Naive thymus-derived CD4-positive, alpha-beta T cell (primary cell): ENCODE measurements at regions of chr19 and their contacts with region 1.

Region 1: GRCh38 chr19:32674959-32675719 is at the start of gene ANKRD27:
- DNase-seq: peak; percentile 96 to 100 (median 98)
- ATAC-seq: peak; percentile 96
- H3K4me3 ChIP-seq: peak within 1 kb of the TSS; percentile 97
- H3K4me3 Mint-ChIP-seq: peak within 1 kb of the TSS; percentile 90 to 98 (median 96)
- H3K27ac ChIP-seq: peak within 1 kb of the TSS; percentile 67
- H3K27ac Mint-ChIP-seq: peak within 1 kb of the TSS; percentile 70 to 90 (median 83)
- H3K4me1 ChIP-seq: peaks cover 10 to 14% of the 10 kb centered on the region in 2 donors
- H3K4me1 Mint-ChIP-seq: peaks cover 25 to 44% (median 36%) of the 10 kb centered on the region in 7 donors
- H3K27me3 ChIP-seq: no peaks in the 10 kb centered on the region
- H3K27me3 Mint-ChIP-seq: peaks cover 6 to 35% (median 8%) of the 10 kb centered on the region in 5 donors
- total RNA-seq, gene ANKRD27: 23.6 to 44.9 (median 41.2) TPM

Region 2: DNA sequence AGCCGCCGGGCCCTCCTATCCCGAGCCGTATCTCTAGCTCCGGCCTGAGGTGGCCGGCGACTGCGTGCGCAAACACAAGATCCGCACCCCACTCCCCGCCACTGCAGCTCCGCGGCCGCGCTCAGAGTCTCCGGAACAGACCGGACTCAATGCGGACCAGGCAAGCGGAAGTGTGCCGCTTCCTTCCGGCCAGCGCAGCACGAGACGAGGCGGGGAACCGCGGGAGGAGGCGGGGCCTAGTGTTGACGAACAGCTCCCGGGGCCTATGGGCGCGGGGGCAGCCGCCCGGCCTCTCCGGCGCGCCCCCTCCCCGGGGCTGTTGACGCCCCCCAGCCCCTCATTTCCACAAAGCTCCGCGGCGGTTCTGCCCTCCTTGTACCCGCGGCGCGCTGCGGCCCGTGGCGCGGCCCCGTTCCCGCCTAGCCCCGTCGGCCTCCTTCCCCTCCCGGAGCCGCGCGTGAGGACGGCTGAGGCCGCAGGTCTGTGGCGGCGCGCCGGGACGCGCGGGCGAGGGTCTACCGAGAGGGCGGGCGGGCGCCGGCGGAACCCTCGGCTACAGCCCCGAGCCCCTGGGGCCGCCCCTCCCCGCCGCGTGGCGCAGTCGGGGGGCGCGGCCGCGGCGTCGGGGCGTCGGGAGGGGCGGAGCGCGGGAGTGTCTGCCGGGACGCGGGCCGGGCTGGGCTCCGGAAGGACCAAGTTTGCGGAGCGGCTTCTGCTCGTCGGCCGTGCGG is 269.5 kb before region 1 on chr19 and contains the start of gene DPY19L3:
- CTCF ChIA-PET with region 1: no interaction called
- POLR2A ChIA-PET with region 1: interaction called, 5 read pairs
- intact Hi-C with region 1: loop called (anchors 1 kb)
- DNase-seq: peak; percentile 74 to 96 (median 82)
- ATAC-seq: peak; percentile 95
- H3K4me3 ChIP-seq: peak within 1 kb of the TSS; percentile 85
- H3K4me3 Mint-ChIP-seq: peak within 1 kb of the TSS; percentile 83 to 93 (median 88)
- H3K27ac ChIP-seq: peak within 1 kb of the TSS; percentile 90
- H3K27ac Mint-ChIP-seq: peak within 1 kb of the TSS; percentile 86 to 91 (median 89)
- H3K4me1 ChIP-seq: peaks cover 4 to 12% of the 10 kb centered on the region in 2 donors
- H3K4me1 Mint-ChIP-seq: peaks cover 8 to 34% (median 17%) of the 10 kb centered on the region in 7 donors
- H3K27me3 ChIP-seq: no peaks in the 10 kb centered on the region
- H3K27me3 Mint-ChIP-seq: no peaks in the 10 kb centered on the region
- total RNA-seq, gene DPY19L3: 8.4 to 19.3 (median 15.8) TPM

Region 3: GRCh38 chr19:32642771-32643170 is 32.4 kb before region 1 on chr19:
- CTCF ChIA-PET with region 1: no interaction called
- POLR2A ChIA-PET with region 1: no interaction called
- intact Hi-C with region 1: loop called (anchors 1 to 2 kb)
- DNase-seq: peak in 8 of 9 donors; percentile 46 to 76 (median 62)
- ATAC-seq: peak; percentile 97
- H3K4me3 ChIP-seq: peak overlapping the region; percentile 44
- H3K4me3 Mint-ChIP-seq: peak overlapping the region; percentile 42 to 80 (median 66)
- H3K27ac ChIP-seq: no peak overlapping the region
- H3K27ac Mint-ChIP-seq: peak overlapping the region; percentile 34 to 90 (median 63)
- H3K4me1 ChIP-seq: peaks cover 20 to 26% of the 10 kb centered on the region in 2 donors
- H3K4me1 Mint-ChIP-seq: peaks cover 9 to 36% (median 27%) of the 10 kb centered on the region in 7 donors
- H3K27me3 ChIP-seq: no peaks in the 10 kb centered on the region
- H3K27me3 Mint-ChIP-seq: no peaks in the 10 kb centered on the region

Region 4: DNA sequence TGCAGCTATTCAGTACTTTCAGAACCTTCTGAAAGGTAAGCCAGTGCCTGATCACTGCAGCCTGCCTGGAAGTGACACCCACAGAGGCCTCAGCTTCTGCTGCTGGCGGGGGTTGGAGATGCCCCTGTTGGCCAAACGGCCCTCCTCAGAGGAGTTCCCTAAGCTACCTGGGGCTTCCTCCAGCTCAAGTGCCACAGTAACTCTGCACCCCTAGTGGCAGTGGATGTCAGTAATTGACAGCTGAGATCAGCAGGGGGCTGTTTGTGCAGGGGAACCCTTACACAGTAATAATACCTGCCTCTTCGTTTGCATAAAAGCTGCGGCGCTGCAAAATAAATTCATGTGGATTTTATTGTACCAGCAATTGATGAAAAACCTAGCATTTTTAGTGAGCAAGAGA is 73.4 kb after region 1 on chr19:
- CTCF ChIA-PET with region 1: no interaction called
- POLR2A ChIA-PET with region 1: no interaction called
- intact Hi-C with region 1: loop called in 1 of 2 experiments (anchors 1 kb)
- DNase-seq: peak in 6 of 9 donors; percentile 19 to 41 (median 30)
- ATAC-seq: no peak
- H3K4me3 ChIP-seq: no peak overlapping the region
- H3K4me3 Mint-ChIP-seq: peak overlapping the region in 1 of 10 donors; percentile 23
- H3K27ac ChIP-seq: no peak overlapping the region
- H3K27ac Mint-ChIP-seq: no peak overlapping the region
- H3K4me1 ChIP-seq: peaks cover 5 to 35% of the 10 kb centered on the region in 2 donors
- H3K4me1 Mint-ChIP-seq: peaks cover 0 to 19% (median 7%) of the 10 kb centered on the region in 7 donors
- H3K27me3 ChIP-seq: peaks cover 0 to 3% of the 10 kb centered on the region in 2 donors
- H3K27me3 Mint-ChIP-seq: peaks cover 7 to 22% (median 16%) of the 10 kb centered on the region in 5 donors

Region 5: DNA sequence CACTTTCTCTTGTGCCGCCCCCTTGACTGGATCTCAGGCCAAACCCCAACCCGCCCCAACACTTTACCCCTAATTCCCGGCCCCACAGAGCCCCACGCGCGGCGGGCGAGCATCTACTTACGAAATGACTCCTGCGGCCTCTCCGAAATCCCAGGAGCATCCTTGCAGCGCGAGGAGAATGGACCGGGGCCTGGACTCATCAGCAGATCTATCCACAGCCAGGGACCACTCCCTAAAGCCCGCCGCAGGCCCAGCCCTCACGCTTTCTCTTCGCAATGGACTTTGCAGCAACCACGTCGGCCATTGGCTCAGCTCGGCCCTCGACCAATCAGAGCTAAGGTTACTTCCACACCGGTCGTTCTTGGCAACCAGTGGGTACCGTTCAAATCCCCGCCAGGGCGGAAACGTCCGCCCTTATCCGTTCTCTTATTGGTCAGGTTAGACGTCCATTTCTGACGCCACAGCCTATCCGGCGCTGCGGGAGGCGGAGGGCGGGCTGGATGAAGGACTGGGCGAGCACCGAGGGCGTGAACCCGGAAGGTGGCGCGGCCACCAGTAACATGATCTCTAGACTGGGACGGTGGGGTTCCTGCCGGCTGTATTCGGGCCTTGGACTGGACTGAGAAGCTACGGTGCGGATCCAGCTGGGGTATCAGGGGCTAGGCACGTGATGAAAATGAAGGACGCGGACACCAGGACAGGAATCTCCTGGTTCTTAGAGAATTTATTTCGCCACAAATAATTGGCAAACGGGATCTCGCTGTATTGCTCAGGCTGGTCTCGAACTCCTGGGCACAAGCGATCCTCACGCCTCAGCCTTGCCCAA is 296.8 kb after region 1 on chr19 and contains the starts of genes CEP89 and FAAP24:
- CTCF ChIA-PET with region 1: no interaction called
- POLR2A ChIA-PET with region 1: no interaction called
- intact Hi-C with region 1: loop called (anchors 1 kb)
- DNase-seq: peak; percentile 89 to 99 (median 98)
- ATAC-seq: peak; percentile 98
- H3K4me3 ChIP-seq: peak within 1 kb of the TSS; percentile 78
- H3K4me3 Mint-ChIP-seq: peak within 1 kb of the TSS; percentile 96 to 100 (median 99)
- H3K27ac ChIP-seq: peak within 1 kb of the TSS; percentile 75
- H3K27ac Mint-ChIP-seq: peak within 1 kb of the TSS; percentile 92 to 97 (median 97)
- H3K4me1 ChIP-seq: peaks cover 0 to 5% of the 10 kb centered on the region in 2 donors
- H3K4me1 Mint-ChIP-seq: peaks cover 14 to 27% (median 20%) of the 10 kb centered on the region in 7 donors
- H3K27me3 ChIP-seq: no peaks in the 10 kb centered on the region
- H3K27me3 Mint-ChIP-seq: no peaks in the 10 kb centered on the region
- total RNA-seq, gene CEP89: 7.4 to 22.4 (median 20.1) TPM
- total RNA-seq, gene FAAP24: 0.71 to 7.2 (median 2.5) TPM

Region 6: GRCh38 chr19:33373701-33374421 is 698.7 kb after region 1 on chr19 and contains the start of gene CEBPG:
- CTCF ChIA-PET with region 1: no interaction called
- POLR2A ChIA-PET with region 1: no interaction called
- intact Hi-C with region 1: loop called (anchors 2 to 10 kb)
- DNase-seq: peak in 2 of 9 donors; percentile 57 to 68
- ATAC-seq: peak; percentile 52
- H3K4me3 ChIP-seq: peak within 1 kb of the TSS; percentile 93
- H3K4me3 Mint-ChIP-seq: peak within 1 kb of the TSS; percentile 87 to 95 (median 92)
- H3K27ac ChIP-seq: peak within 1 kb of the TSS; percentile 98
- H3K27ac Mint-ChIP-seq: peak within 1 kb of the TSS; percentile 73 to 97 (median 85)
- H3K4me1 ChIP-seq: peaks cover 16 to 19% of the 10 kb centered on the region in 2 donors
- H3K4me1 Mint-ChIP-seq: peaks cover 36 to 52% (median 48%) of the 10 kb centered on the region in 7 donors
- H3K27me3 ChIP-seq: no peaks in the 10 kb centered on the region
- H3K27me3 Mint-ChIP-seq: peaks cover 0 to 3% (median 0%) of the 10 kb centered on the region in 5 donors
- total RNA-seq, gene CEBPG: 17.1 to 22.4 (median 21.1) TPM